ENCODE measurements at regions of chr2 and their contacts with region 1.

Region 1: DNA sequence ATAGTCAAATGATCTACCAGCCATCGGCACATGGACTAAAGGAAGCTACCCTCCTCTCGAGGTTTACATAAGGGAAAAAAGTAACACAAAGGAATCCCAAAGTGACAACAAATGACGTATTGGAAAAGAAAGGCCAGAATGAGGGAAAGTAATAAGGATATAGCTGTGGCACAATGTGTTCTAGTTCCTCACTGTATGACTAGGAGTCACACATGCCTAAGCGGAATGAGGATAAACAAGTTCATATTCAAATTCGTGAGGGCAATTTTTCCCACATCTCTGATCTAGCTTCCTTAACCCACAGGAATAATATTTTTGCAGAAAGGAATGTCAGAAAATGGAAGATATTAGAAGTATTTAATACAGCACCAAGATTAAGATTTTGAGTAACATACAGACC is 162.3 kb upstream of the PID1 start:
- DNase-seq: no peak
- H3K4me3 ChIP-seq: no peak overlapping the region
- H3K27ac ChIP-seq: no peak overlapping the region
- H3K4me1 ChIP-seq: no peaks in the 10 kb centered on the region
- H3K27me3 ChIP-seq: no peaks in the 10 kb centered on the region
- CTCF ChIP-seq: no peak
- EP300 ChIP-seq: no peak
- POLR2A ChIP-seq: no peak

Region 2: DNA sequence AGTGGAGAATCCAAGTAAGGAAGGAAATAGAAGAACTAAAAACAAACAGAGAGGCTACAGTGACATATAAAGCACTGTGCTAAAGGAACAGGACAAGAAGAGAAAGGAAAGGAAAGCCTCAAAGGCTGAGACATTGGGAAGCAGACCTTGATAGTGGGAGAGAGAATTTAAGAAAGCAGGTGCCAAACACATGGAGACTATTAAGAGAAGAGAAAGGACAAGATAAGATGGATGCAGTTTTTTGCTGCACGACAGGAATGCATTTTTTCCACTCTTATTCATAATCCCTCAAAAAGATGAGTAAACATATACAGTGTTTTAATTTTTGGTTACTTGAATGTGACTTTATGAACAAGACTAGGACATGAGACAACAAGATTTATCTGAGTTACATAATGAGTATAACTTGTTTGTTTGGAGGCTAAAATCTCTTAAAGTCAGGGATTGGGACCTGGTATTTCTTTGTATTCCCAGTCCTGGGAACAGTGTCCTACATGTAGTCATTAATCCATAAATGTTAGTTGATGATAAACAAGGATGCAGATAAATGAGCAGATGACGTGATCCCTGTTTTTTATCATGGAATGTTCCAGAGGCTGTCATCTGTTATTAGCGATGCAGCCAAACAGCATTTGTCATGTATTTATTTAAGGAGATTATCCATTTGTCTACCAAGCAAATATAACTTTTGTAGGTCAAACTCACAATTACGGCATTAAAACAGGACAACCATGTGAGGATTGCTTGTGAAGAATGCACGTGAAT is 139.3 kb after region 1 on chr2:
- intact Hi-C with region 1: no loop called
- DNase-seq: no peak
- H3K4me3 ChIP-seq: no peak overlapping the region
- H3K27ac ChIP-seq: peak overlapping the region in 3 of 4 donors; percentile 3 to 44 (median 41)
- H3K4me1 ChIP-seq: peaks cover 0 to 9% (median 4%) of the 10 kb centered on the region in 4 donors
- H3K27me3 ChIP-seq: no peaks in the 10 kb centered on the region
- CTCF ChIP-seq: no peak
- EP300 ChIP-seq: no peak
- POLR2A ChIP-seq: no peak

Region 3: DNA sequence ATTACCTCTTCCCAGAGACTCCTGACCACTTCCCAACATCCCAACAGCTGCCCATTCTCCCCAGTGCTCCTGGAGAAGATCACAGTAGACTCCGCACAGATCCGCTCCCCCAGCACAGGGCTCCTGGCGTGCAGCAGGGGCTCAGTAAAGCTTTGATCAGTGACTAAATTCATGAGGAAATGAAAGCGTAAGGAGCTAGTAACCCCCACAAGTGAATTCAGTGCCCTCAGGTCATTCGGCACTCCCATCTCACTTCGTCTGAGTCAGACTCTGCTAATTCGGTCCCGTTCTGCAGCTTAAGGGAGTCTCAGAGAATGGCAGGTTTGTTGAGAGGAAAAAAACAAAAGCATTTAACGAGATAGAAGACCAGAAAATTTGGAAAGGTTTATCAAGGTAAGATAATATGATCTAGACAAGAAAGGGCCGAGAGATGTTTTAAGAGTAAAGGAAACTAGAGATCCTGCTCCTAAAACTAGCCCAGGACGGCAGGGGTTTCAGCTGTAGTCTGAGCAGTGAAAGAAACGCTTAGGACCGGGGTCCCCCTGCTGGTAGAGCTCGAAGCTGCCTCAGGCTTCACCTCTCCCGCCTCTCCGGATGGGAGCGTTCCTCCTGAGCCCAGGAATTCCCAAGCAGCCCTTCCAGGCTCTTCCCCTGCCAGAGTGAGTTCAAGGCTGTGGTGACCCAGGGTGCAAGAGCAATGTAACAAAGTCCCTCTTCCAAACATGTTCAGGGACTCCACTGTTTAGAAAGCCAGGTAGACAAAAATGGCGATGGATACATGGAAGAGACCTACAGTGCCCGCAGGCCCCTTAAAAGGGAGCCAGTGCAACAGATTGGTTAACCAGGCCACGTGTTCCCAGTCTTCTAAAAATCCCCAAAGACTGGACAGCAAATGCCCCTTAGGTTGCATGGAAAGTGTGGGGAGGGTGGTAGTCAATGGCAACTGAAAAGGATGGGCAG is 153.7 kb after region 1 on chr2:
- intact Hi-C with region 1: loop called (anchors 2 kb)
- DNase-seq: peak; percentile 93
- H3K4me3 ChIP-seq: peak overlapping the region; percentile 28 to 38 (median 34)
- H3K27ac ChIP-seq: peak overlapping the region in 1 of 4 donors; percentile 17
- H3K4me1 ChIP-seq: peaks cover 0 to 9% (median 4%) of the 10 kb centered on the region in 4 donors
- H3K27me3 ChIP-seq: peaks cover 0 to 7% (median 0%) of the 10 kb centered on the region in 4 donors
- CTCF ChIP-seq: peak; percentile 64 to 78 (median 70)
- EP300 ChIP-seq: no peak
- POLR2A ChIP-seq: no peak

Region 4: GRCh38 chr2:229601396-229601795 is 168.0 kb after region 1 on chr2:
- intact Hi-C with region 1: no loop called
- DNase-seq: no peak
- H3K4me3 ChIP-seq: no peak overlapping the region
- H3K27ac ChIP-seq: no peak overlapping the region
- H3K4me1 ChIP-seq: no peaks in the 10 kb centered on the region
- H3K27me3 ChIP-seq: no peaks in the 10 kb centered on the region
- CTCF ChIP-seq: no peak
- EP300 ChIP-seq: no peak
- POLR2A ChIP-seq: no peak